ENCODE measurements at regions of chr17 and their contacts with region 1.

Region 1: GRCh38 chr17:77420804-77421629 is 280.2 kb downstream of the SEC14L1 start:
- DNase-seq: peak; percentile 74
- H3K4me3 ChIP-seq: no peak overlapping the region
- H3K27ac ChIP-seq: peak overlapping the region; percentile 76
- H3K4me1 ChIP-seq: peaks cover 78% of the 10 kb centered on the region
- H3K27me3 ChIP-seq: no peaks in the 10 kb centered on the region
- CTCF ChIP-seq: no peak

Region 2: GRCh38 chr17:77325577-77326075 is 95.4 kb before region 1 on chr17:
- CTCF ChIA-PET with region 1: no interaction called
- dilution Hi-C with region 1: loop called (anchors 5 kb)
- in situ Hi-C with region 1: loop called in 1 of 2 experiments (anchors 10 kb)
- intact Hi-C with region 1: loop called (anchors 2 kb)
- DNase-seq: no peak
- H3K4me3 ChIP-seq: no peak overlapping the region
- H3K27ac ChIP-seq: no peak overlapping the region
- H3K4me1 ChIP-seq: peaks cover 64% of the 10 kb centered on the region
- H3K27me3 ChIP-seq: no peaks in the 10 kb centered on the region
- CTCF ChIP-seq: no peak

Region 3: GRCh38 chr17:77382966-77383612 is 37.9 kb before region 1 on chr17:
- CTCF ChIA-PET with region 1: no interaction called
- dilution Hi-C with region 1: loop called (anchors 5 kb)
- in situ Hi-C with region 1: no loop called
- intact Hi-C with region 1: no loop called
- DNase-seq: peak; percentile 54
- H3K4me3 ChIP-seq: no peak overlapping the region
- H3K27ac ChIP-seq: no peak overlapping the region
- H3K4me1 ChIP-seq: peaks cover 53% of the 10 kb centered on the region
- H3K27me3 ChIP-seq: no peaks in the 10 kb centered on the region
- CTCF ChIP-seq: no peak

Region 4: DNA sequence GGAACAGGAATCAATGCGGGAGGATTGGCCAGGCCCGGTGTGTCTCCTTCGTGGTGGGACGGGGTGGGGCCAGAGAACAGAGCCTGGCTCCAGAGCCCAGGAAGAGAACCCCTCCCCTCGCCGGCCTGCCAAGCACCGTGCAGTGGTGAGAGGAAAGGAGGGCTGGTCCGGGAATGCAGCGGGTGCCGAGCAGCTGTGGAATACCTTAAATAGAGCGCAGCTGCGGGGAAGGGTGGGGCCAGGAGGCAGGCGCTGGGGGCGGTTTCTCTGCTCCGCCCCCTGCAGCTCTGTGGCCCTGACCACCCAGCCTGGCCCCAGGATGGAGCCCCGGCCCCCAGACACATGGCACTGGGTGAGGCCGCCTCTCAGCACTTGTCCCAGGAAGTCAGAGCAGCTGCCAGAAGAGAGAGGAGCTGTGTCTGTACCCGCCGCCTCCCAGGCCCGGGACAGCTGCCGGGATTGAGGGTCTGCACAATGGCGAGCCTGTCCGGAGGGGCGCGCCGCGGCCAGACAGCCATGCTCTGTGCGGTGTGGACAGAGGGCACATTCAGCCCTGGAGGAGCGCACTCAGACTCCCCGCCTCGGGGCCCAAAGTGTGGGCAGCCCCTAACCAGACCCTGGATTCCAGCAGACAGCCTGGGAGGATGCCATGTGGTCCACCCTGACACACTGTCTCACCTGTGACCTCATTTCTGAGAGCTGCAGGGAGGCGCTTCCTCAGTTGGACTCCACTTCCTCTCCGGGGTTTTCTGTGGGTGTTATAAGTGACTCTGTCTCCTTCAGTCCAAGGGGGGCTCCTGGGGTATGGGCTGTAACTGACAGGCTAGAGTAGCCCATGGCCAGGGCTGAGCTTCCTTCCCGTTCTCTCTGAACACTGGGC is 11.5 kb before region 1 on chr17:
- CTCF ChIA-PET with region 1: no interaction called
- dilution Hi-C with region 1: no loop called
- in situ Hi-C with region 1: no loop called
- intact Hi-C with region 1: loop called (anchors 1 kb)
- DNase-seq: peak; percentile 62
- H3K4me3 ChIP-seq: no peak overlapping the region
- H3K27ac ChIP-seq: peak overlapping the region; percentile 48
- H3K4me1 ChIP-seq: peaks cover 84% of the 10 kb centered on the region
- H3K27me3 ChIP-seq: no peaks in the 10 kb centered on the region
- CTCF ChIP-seq: no peak

Region 5: GRCh38 chr17:77471984-77472461 is 51.0 kb after region 1 on chr17:
- CTCF ChIA-PET with region 1: no interaction called
- dilution Hi-C with region 1: loop called (anchors 5 kb)
- in situ Hi-C with region 1: loop called in 1 of 2 experiments (anchors 5 kb)
- intact Hi-C with region 1: no loop called
- DNase-seq: peak; percentile 76
- H3K4me3 ChIP-seq: no peak overlapping the region
- H3K27ac ChIP-seq: peak overlapping the region; percentile 82
- H3K4me1 ChIP-seq: peaks cover 72% of the 10 kb centered on the region
- H3K27me3 ChIP-seq: no peaks in the 10 kb centered on the region
- CTCF ChIP-seq: no peak

Region 6: DNA sequence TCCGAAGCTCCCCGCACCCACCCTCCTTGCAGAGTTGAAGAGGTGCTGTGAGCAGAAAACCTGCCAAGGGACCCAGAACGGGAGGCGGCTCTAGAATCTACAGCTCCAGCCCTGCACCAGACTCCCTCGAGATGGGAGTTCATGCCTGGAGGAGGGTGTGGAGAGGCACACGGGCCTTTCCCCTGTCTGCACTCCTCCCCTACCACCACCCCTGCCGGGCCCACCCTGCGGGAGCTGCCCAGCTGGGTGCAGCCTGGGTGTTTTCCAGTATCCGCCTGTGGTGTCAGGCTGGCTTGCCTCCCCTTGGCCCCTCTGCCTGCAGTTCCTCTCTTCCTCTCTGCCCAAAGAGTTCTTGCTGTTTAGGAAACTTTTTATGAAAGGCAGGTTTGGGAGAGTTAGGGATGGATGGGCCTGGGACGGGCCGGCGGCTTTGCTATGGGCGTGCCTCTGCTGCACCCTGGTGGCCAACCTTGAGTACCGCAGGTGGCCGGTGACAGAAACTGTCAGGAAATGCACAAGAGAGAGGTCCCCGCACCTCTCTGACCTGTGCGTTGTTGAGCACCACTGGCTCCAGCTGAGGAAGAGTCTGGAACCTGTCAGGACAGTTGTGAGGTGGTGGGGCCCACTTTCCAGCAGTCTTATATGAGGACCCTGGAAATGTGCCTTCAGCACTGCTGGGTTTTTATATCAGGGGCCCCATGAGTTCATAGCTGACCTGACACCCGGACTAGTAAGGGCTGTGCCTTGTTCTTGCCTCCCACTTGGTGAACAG is 73.8 kb after region 1 on chr17:
- CTCF ChIA-PET with region 1: no interaction called
- dilution Hi-C with region 1: no loop called
- in situ Hi-C with region 1: no loop called
- intact Hi-C with region 1: no loop called
- DNase-seq: peak; percentile 46
- H3K4me3 ChIP-seq: no peak overlapping the region
- H3K27ac ChIP-seq: no peak overlapping the region
- H3K4me1 ChIP-seq: no peaks in the 10 kb centered on the region
- H3K27me3 ChIP-seq: no peaks in the 10 kb centered on the region
- CTCF ChIP-seq: peak; percentile 68 to 95

Measured in mammary epithelial cell (primary cell).